ENCODE measurements at regions of chr12 and their contacts with region 1.

Region 1: DNA sequence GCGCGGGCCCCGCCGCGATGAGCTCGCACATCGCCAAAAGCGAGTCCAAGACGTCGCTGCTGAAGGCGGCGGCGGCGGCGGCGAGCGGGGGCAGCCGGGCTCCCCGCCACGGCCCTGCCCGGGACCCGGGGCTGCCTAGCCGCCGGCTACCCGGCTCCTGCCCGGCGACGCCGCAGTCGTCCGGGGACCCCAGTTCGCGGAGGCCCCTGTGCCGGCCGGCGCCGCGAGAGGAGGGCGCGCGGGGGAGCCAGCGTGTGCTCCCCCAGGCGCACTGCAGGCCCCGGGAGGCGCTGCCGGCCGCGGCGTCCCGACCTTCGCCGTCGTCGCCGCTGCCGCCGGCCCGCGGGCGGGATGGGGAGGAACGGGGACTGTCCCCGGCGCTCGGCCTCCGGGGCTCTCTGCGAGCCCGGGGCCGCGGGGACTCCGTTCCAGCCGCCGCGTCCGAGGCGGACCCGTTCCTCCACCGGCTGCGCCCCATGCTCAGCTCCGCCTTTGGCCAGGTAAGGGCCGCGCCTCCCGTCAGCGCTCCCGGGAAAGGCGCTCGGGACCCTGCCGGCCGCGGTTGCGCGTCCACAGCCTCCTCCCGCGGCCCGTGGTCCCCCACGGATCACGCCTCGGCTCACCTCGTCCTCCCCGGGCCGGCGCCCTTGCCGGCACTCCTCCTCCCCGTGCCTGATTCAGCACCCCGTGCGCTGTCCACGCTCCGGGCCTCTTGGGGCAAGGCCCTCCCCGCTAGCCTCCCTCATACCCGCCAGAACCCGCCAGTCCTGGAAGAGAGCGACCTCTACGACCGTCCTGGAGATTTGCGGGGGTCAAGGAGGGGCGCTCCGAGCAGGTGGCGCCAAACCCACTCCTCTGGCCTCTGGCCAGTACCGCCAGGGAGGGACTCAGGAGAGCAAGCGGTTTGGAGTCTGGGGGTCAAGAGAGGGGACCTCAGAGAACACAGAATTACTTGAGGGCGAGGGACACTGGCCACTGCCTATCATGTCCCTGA is 711 bp downstream of the CABP1 start:
- DNase-seq: peak; percentile 53 to 88
- H3K4me3 ChIP-seq: peak overlapping the region; percentile 50 to 78 (median 57)
- H3K27ac ChIP-seq: no peak overlapping the region
- H3K4me1 ChIP-seq: peaks cover 0 to 11% (median 8%) of the 10 kb centered on the region in 4 experiments; a peak in 5 of 7 replicates
- H3K27me3 ChIP-seq: peaks cover 0 to 16% (median 12%) of the 10 kb centered on the region in 4 experiments; a peak in 4 of 7 replicates
- CTCF ChIP-seq: peak; percentile 36 to 56 (median 37)
- EP300 ChIP-seq: no peak
- POLR2A ChIP-seq: no peak
- RAD21 ChIP-seq: peak; percentile 35 to 46

Region 2: DNA sequence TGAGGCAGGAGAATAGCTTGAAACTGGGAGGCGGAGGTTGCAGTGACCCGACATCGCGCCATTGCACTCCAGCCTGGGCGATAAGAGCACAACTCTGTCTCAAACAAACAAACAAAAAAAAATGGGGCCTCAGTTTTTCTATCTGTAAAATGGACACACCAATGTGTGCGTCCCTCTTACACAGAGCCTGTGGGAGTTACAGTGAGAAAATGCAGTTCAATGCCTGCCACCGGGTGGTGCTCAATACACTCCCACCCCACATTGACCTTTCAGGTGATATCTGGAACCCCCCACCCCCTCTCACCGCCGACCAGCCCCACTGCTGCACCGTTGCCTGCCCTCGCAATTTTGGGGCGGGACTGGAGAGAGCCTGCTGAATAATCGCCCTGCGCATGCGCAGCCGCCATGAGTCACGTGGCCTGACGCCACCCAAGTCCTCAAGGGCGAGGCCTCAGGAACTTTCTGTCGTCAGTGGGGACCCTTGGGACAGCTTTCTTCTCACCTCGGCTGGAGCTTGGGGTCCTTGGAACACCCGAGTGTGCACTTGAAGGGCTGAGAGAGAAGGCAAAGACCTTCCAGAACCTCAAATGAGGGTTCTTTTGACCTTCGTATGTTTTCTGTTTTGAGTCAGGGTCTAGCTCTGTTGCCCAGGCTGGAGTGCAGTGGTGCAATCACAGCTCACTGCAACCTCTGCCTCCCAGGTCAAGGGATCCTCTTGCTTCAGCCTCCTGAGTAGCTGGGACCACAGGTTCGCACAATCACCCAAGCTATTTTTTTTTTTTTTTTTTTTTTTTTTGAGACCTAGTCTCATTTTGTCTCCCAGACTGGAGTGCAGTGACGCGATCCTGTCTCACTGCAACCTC is 15.3 kb before region 1 on chr12:
- CTCF ChIA-PET with region 1: interaction called, 70 read pairs
- POLR2A ChIA-PET with region 1: interaction called, 4 read pairs
- DNase-seq: peak; percentile 51 to 76
- H3K4me3 ChIP-seq: no peak overlapping the region
- H3K27ac ChIP-seq: no peak overlapping the region
- H3K4me1 ChIP-seq: no peaks in the 10 kb centered on the region
- H3K27me3 ChIP-seq: no peaks in the 10 kb centered on the region
- CTCF ChIP-seq: peak; percentile 53 to 63 (median 58)
- EP300 ChIP-seq: no peak
- POLR2A ChIP-seq: no peak
- RAD21 ChIP-seq: peak; percentile 62 to 67

Measured in H1 (cell line).